H1 (cell line): ENCODE measurements at regions of chr7 and their contacts with region 1.

Region 1: GRCh38 chr7:87797798-87798403 is 78.3 kb downstream of the SLC25A40 start:
- DNase-seq: no peak
- H3K4me3 ChIP-seq: no peak overlapping the region
- H3K27ac ChIP-seq: no peak overlapping the region
- H3K4me1 ChIP-seq: no peaks in the 10 kb centered on the region
- H3K27me3 ChIP-seq: no peaks in the 10 kb centered on the region
- CTCF ChIP-seq: peak in 2 of 3 experiments; percentile 62 to 80; a peak in 2 of 4 replicates
- EP300 ChIP-seq: no peak
- POLR2A ChIP-seq: no peak
- RAD21 ChIP-seq: peak; percentile 84 to 87

Region 2: DNA sequence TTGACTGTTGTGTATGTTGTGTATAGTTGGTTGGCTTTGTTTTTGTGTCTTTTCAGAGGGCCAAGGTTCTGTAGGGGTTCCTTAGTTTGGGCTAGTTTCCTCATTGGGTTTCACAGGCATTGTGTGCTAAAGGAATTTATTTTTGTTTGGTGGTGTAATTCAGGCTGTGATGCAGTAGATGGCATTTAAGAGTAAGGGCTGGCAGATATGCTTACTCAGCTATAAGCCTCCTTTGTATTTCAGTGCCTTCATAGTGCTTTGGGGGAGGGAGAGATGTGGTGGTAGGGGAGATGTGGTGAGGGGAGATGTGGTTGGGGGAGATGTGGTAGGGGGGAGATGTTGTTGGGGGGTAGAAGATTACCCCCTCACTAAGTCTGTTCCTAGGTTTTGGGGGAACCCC is 13.5 kb before region 1 on chr7:
- CTCF ChIA-PET with region 1: interaction called, 13 read pairs
- POLR2A ChIA-PET with region 1: no interaction called
- DNase-seq: no peak
- H3K4me3 ChIP-seq: no peak overlapping the region
- H3K27ac ChIP-seq: no peak overlapping the region
- H3K4me1 ChIP-seq: no peaks in the 10 kb centered on the region
- H3K27me3 ChIP-seq: no peaks in the 10 kb centered on the region
- CTCF ChIP-seq: peak in 1 of 3 experiments; percentile 16; a peak in 2 of 4 replicates
- EP300 ChIP-seq: no peak
- POLR2A ChIP-seq: no peak
- RAD21 ChIP-seq: peak; percentile 37 to 48